Ovary (tissue), 10 donors: ENCODE measurements at regions of chr21 and their contacts with region 1.

Region 1: GRCh38 chr21:43884861-43885417 is 19.9 kb downstream of the AGPAT3 start:
- DNase-seq: peak in 1 of 5 donors; percentile 51
- H3K4me3 ChIP-seq: no peak overlapping the region
- H3K27ac ChIP-seq: no peak overlapping the region
- H3K4me1 ChIP-seq: peaks cover 11% of the 10 kb centered on the region
- H3K27me3 ChIP-seq: no peaks in the 10 kb centered on the region
- CTCF ChIP-seq: no peak
- EP300 ChIP-seq: no peak
- POLR2A ChIP-seq: no peak

Region 2: DNA sequence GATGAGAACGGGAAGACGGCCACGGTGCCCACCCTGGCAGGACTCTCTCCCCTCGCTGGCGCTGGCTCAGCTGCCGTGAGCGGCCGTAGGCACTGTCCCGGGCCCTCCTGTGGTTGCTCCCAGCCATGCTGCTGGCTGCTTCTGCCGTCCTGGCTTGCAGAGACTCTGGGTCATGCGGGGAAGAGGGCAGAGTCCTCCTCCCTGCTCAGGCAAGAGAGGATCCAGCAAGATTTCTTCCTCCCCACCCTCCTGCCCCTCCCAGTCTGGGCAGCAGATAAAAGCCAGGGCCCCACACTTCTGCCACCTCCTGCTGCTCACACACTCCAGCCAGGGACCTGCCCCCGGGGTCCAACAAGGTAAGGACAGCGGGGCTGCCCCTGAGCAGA is 40.1 kb after region 1 on chr21:
- intact Hi-C with region 1: no loop called
- DNase-seq: no peak
- H3K4me3 ChIP-seq: no peak overlapping the region
- H3K27ac ChIP-seq: no peak overlapping the region
- H3K4me1 ChIP-seq: peaks cover 8% of the 10 kb centered on the region
- H3K27me3 ChIP-seq: no peaks in the 10 kb centered on the region
- CTCF ChIP-seq: no peak
- EP300 ChIP-seq: no peak
- POLR2A ChIP-seq: no peak

Region 3: GRCh38 chr21:43938751-43939442 is 54.0 kb after region 1 on chr21:
- intact Hi-C with region 1: loop called in 1 of 4 experiments (anchors 5 kb)
- DNase-seq: peak in 4 of 5 donors; percentile 50 to 63 (median 54)
- H3K4me3 ChIP-seq: no peak overlapping the region
- H3K27ac ChIP-seq: no peak overlapping the region
- H3K4me1 ChIP-seq: peaks cover 4% of the 10 kb centered on the region
- H3K27me3 ChIP-seq: no peaks in the 10 kb centered on the region
- CTCF ChIP-seq: peak in 2 of 3 donors; percentile 40 to 50
- EP300 ChIP-seq: no peak
- POLR2A ChIP-seq: no peak